GM12878 (cell line): ENCODE measurements at regions of chr5 and their contacts with region 1.

Region 1: GRCh38 chr5:32329308-32329834 is 16.6 kb upstream of the MTMR12 start:
- DNase-seq: no peak
- ATAC-seq: peak; percentile 96
- H3K4me3 ChIP-seq: no peak overlapping the region
- H3K27ac ChIP-seq: no peak overlapping the region
- H3K4me1 ChIP-seq: peaks cover 7% of the 10 kb centered on the region; the same call in 1 of the 2 replicates
- H3K27me3 ChIP-seq: no peaks in the 10 kb centered on the region
- CTCF ChIP-seq: peak; percentile 79 to 89 (median 85)
- EP300 ChIP-seq: no peak
- POLR2A ChIP-seq: no peak
- RAD21 ChIP-seq: peak; percentile 94

Region 2: GRCh38 chr5:31825518-31826068 is 503.8 kb before region 1 on chr5:
- CTCF ChIA-PET with region 1: no interaction called
- POLR2A ChIA-PET with region 1: no interaction called
- RAD21 ChIA-PET with region 1: no interaction called
- SMC1A ChIA-PET with region 1: no interaction called
- in situ Hi-C with region 1: no loop called
- intact Hi-C with region 1: loop called (anchors 5 kb)
- DNase-seq: peak; percentile 8
- ATAC-seq: peak; percentile 86
- H3K4me3 ChIP-seq: no peak overlapping the region
- H3K27ac ChIP-seq: no peak overlapping the region
- H3K4me1 ChIP-seq: no peaks in the 10 kb centered on the region
- H3K27me3 ChIP-seq: no peaks in the 10 kb centered on the region
- CTCF ChIP-seq: peak; percentile 47 to 65 (median 59); a peak in 5 of 6 replicates
- EP300 ChIP-seq: no peak
- POLR2A ChIP-seq: no peak
- RAD21 ChIP-seq: peak; percentile 66

Region 3: GRCh38 chr5:32174011-32174870 is 155.1 kb before region 1 on chr5 and contains the start of gene GOLPH3:
- CTCF ChIA-PET with region 1: interaction called, 4 read pairs
- POLR2A ChIA-PET with region 1: no interaction called
- RAD21 ChIA-PET with region 1: no interaction called
- SMC1A ChIA-PET with region 1: interaction called, 3 read pairs
- in situ Hi-C with region 1: no loop called
- intact Hi-C with region 1: loop called (anchors 5 kb)
- DNase-seq: no peak
- ATAC-seq: peak; percentile 89
- H3K4me3 ChIP-seq: peak within 1 kb of the TSS; percentile 95
- H3K27ac ChIP-seq: peak within 1 kb of the TSS; percentile 98
- H3K4me1 ChIP-seq: peaks cover 3% of the 10 kb centered on the region; the same call in 1 of the 2 replicates
- H3K27me3 ChIP-seq: no peaks in the 10 kb centered on the region
- CTCF ChIP-seq: no peak
- EP300 ChIP-seq: no peak
- POLR2A ChIP-seq: peak; percentile 96
- RAD21 ChIP-seq: no peak
- polyA plus RNA-seq, gene GOLPH3: 14.0 to 28.5 TPM

Region 4: GRCh38 chr5:32232441-32233219 is 96.7 kb before region 1 on chr5:
- CTCF ChIA-PET with region 1: interaction called, 339 read pairs
- POLR2A ChIA-PET with region 1: interaction called, 7 read pairs
- RAD21 ChIA-PET with region 1: interaction called, 172 read pairs
- SMC1A ChIA-PET with region 1: interaction called, 153 read pairs
- in situ Hi-C with region 1: loop called (anchors 5 kb)
- intact Hi-C with region 1: loop called (anchors 1 kb)
- DNase-seq: peak; percentile 19
- ATAC-seq: peak; percentile 99
- H3K4me3 ChIP-seq: no peak overlapping the region
- H3K27ac ChIP-seq: no peak overlapping the region
- H3K4me1 ChIP-seq: no peaks in the 10 kb centered on the region
- H3K27me3 ChIP-seq: no peaks in the 10 kb centered on the region
- CTCF ChIP-seq: peak; percentile 78 to 87 (median 80)
- EP300 ChIP-seq: no peak
- POLR2A ChIP-seq: no peak
- RAD21 ChIP-seq: peak; percentile 90

Region 5: DNA sequence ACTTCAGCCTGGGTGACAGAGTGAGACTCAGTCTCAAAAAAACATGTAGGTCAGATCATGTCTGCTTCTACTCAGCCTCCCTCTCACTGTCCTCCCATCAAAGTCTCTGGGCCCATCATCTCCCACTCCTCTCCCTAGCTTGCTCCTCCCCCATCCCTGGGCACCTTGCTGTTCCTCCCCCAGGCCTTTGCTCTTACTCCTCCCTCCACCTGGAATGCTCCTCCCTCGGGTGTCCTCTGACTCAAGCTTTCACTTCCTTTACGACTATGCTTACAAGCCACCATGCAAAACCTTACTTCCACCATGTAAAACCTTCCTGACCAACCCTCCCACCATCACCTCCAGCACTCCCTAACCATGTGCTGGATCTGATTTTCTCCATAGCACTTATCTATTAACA is 68.2 kb before region 1 on chr5:
- CTCF ChIA-PET with region 1: interaction called, 11 read pairs
- POLR2A ChIA-PET with region 1: no interaction called
- RAD21 ChIA-PET with region 1: interaction called, 3 read pairs
- SMC1A ChIA-PET with region 1: interaction called, 11 read pairs
- in situ Hi-C with region 1: no loop called
- intact Hi-C with region 1: no loop called
- DNase-seq: no peak
- ATAC-seq: peak; percentile 78
- H3K4me3 ChIP-seq: no peak overlapping the region
- H3K27ac ChIP-seq: 0 out of 2 replicates have a peak overlapping the region, but pooled peaks have one; percentile 13
- H3K4me1 ChIP-seq: peaks cover 6% of the 10 kb centered on the region
- H3K27me3 ChIP-seq: no peaks in the 10 kb centered on the region
- CTCF ChIP-seq: no peak
- EP300 ChIP-seq: no peak
- POLR2A ChIP-seq: no peak
- RAD21 ChIP-seq: no peak

Region 6: GRCh38 chr5:32283539-32284377 is 45.6 kb before region 1 on chr5:
- CTCF ChIA-PET with region 1: interaction called, 31 read pairs
- POLR2A ChIA-PET with region 1: interaction called, 3 read pairs
- RAD21 ChIA-PET with region 1: interaction called, 3 read pairs
- SMC1A ChIA-PET with region 1: interaction called, 19 read pairs
- in situ Hi-C with region 1: no loop called
- intact Hi-C with region 1: loop called (anchors 5 kb)
- DNase-seq: no peak
- ATAC-seq: peak; percentile 52
- H3K4me3 ChIP-seq: no peak overlapping the region
- H3K27ac ChIP-seq: no peak overlapping the region
- H3K4me1 ChIP-seq: peaks cover 28% of the 10 kb centered on the region
- H3K27me3 ChIP-seq: no peaks in the 10 kb centered on the region
- CTCF ChIP-seq: no peak
- EP300 ChIP-seq: no peak
- POLR2A ChIP-seq: no peak
- RAD21 ChIP-seq: no peak

Region 7: GRCh38 chr5:32613050-32613672 is 283.8 kb after region 1 on chr5:
- CTCF ChIA-PET with region 1: interaction called, 18 read pairs
- POLR2A ChIA-PET with region 1: no interaction called
- RAD21 ChIA-PET with region 1: interaction called, 5 read pairs
- SMC1A ChIA-PET with region 1: interaction called, 8 read pairs
- in situ Hi-C with region 1: no loop called
- intact Hi-C with region 1: no loop called
- DNase-seq: peak; percentile 46
- ATAC-seq: peak; percentile 90
- H3K4me3 ChIP-seq: no peak overlapping the region
- H3K27ac ChIP-seq: no peak overlapping the region
- H3K4me1 ChIP-seq: no peaks in the 10 kb centered on the region
- H3K27me3 ChIP-seq: no peaks in the 10 kb centered on the region
- CTCF ChIP-seq: peak; percentile 80 to 96 (median 95); a peak in 5 of 6 replicates
- EP300 ChIP-seq: no peak
- POLR2A ChIP-seq: no peak
- RAD21 ChIP-seq: peak; percentile 98